GM10248 (cell line): ENCODE measurements at regions of chr2 and their contacts with region 1.

Region 1: GRCh38 chr2:149027590-149028218 is 10.8 kb upstream of the LYPD6B start:
- DNase-seq: no peak
- CTCF ChIP-seq: no peak

Region 2: GRCh38 chr2:148534416-148535204 is 493.1 kb before region 1 on chr2:
- CTCF ChIA-PET with region 1: no interaction called
- POLR2A ChIA-PET with region 1: no interaction called
- DNase-seq: no peak
- CTCF ChIP-seq: no peak

Region 3: DNA sequence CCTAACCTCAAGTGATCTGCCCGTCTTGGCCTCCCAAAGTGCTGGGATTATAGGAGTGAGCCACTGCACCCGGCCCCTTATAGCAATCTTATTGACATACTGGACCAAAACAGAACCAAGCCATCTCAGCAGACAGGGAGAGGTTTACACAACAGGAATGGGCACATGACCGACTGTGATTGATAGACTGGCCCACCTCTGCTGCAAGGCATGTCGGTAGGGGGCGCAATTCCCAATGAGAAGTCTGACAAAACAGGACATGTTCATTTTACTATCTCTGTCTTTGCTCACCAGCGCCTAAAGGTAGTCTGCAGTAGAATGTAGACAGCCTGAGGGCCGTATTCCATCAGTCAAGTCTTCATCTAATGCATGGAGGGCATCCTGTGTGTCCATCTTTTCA is 12.7 kb after region 1 on chr2:
- CTCF ChIA-PET with region 1: interaction called, 259 read pairs
- POLR2A ChIA-PET with region 1: no interaction called
- DNase-seq: peak; percentile 67
- CTCF ChIP-seq: peak; percentile 68

Region 4: GRCh38 chr2:149365826-149366583 is 338.3 kb after region 1 on chr2:
- CTCF ChIA-PET with region 1: no interaction called
- POLR2A ChIA-PET with region 1: no interaction called
- DNase-seq: no peak
- CTCF ChIP-seq: no peak